SK-N-SH (cell line): ENCODE measurements at regions of chr5 and their contacts with region 1.

Region 1: GRCh38 chr5:177473461-177474001 is at the start of gene DBN1:
- DNase-seq: peak; percentile 98
- H3K4me3 ChIP-seq: peak within 1 kb of the TSS; percentile 96
- H3K27ac ChIP-seq: peak within 1 kb of the TSS; percentile 52 to 92; a peak in 3 of 4 replicates
- H3K4me1 ChIP-seq: peaks cover 35 to 76% of the 10 kb centered on the region in 2 experiments; a peak in 3 of 4 replicates
- H3K27me3 ChIP-seq: no peaks in the 10 kb centered on the region
- CTCF ChIP-seq: no peak
- EP300 ChIP-seq: no peak
- RAD21 ChIP-seq: no peak
- polyA plus RNA-seq, gene DBN1: 176 and 244 TPM in 2 replicates

Region 2: GRCh38 chr5:177462021-177462670 is 11.4 kb before region 1 on chr5:
- CTCF ChIA-PET with region 1: interaction called, 215 read pairs
- POLR2A ChIA-PET with region 1: interaction called, 43 read pairs
- DNase-seq: no peak
- H3K4me3 ChIP-seq: no peak overlapping the region
- H3K27ac ChIP-seq: peak overlapping the region in 1 of 2 experiments; percentile 25; a peak in 1 of 4 replicates
- H3K4me1 ChIP-seq: peaks cover 0 to 31% of the 10 kb centered on the region in 2 experiments; a peak in 3 of 4 replicates
- H3K27me3 ChIP-seq: no peaks in the 10 kb centered on the region
- CTCF ChIP-seq: no peak
- EP300 ChIP-seq: no peak
- RAD21 ChIP-seq: no peak